ENCODE measurements at regions of chr2 and their contacts with region 1.

Region 1: GRCh38 chr2:28780496-28780895 is 28.9 kb downstream of the PPP1CB start:
- DNase-seq: no peak
- H3K4me3 ChIP-seq: no peak overlapping the region
- H3K27ac ChIP-seq: no peak overlapping the region
- H3K4me1 ChIP-seq: no peaks in the 10 kb centered on the region
- H3K27me3 ChIP-seq: no peaks in the 10 kb centered on the region
- CTCF ChIP-seq: no peak

Region 2: DNA sequence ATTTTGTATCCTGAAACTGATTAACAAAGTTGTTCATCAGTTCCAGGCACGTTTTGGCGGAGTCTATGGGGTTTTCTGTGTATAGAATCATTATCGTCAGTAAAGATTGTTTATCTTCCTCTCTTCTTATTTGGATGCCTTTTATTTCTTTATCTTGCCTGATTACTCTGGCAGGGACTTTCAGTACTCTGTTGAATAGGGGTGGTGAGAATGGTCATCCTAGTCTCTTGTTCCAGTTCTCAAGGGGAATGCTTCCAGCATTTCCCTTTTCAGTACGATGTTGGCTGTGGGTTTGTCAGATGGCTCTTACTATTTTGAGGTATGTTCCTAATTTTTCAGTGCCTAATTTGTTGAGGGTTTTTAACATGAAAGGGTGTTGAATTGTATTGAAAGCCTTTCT is 16.1 kb after region 1 on chr2:
- CTCF ChIA-PET with region 1: interaction called, 13 read pairs
- POLR2A ChIA-PET with region 1: no interaction called
- intact Hi-C with region 1: no loop called
- DNase-seq: no peak
- H3K4me3 ChIP-seq: no peak overlapping the region
- H3K27ac ChIP-seq: no peak overlapping the region; the same call in 1 of the 2 replicates
- H3K4me1 ChIP-seq: peaks cover 8% of the 10 kb centered on the region
- H3K27me3 ChIP-seq: no peaks in the 10 kb centered on the region
- CTCF ChIP-seq: no peak

Measured in PC-9 (cell line).